ENCODE measurements at regions of chr17 and their contacts with region 1.

Region 1: GRCh38 chr17:41548844-41549595 is 20.9 kb upstream of the KRT19 start:
- DNase-seq: peak; percentile 65 to 71 (median 66)
- H3K4me3 ChIP-seq: peak overlapping the region; percentile 0 to 64 (median 21)
- H3K4me3 Mint-ChIP-seq: peak overlapping the region; percentile 66 to 80
- H3K27ac ChIP-seq: no peak overlapping the region
- H3K27ac Mint-ChIP-seq: peak overlapping the region in 3 of 7 donors; percentile 48 to 80 (median 60)
- H3K4me1 ChIP-seq: peaks cover 16 to 20% of the 10 kb centered on the region in 2 donors
- H3K4me1 Mint-ChIP-seq: peaks cover 21% of the 10 kb centered on the region
- H3K27me3 ChIP-seq: no peaks in the 10 kb centered on the region
- H3K27me3 Mint-ChIP-seq: peaks cover 1 to 15% (median 8%) of the 10 kb centered on the region in 3 donors
- CTCF ChIP-seq: peak; percentile 100

Region 2: DNA sequence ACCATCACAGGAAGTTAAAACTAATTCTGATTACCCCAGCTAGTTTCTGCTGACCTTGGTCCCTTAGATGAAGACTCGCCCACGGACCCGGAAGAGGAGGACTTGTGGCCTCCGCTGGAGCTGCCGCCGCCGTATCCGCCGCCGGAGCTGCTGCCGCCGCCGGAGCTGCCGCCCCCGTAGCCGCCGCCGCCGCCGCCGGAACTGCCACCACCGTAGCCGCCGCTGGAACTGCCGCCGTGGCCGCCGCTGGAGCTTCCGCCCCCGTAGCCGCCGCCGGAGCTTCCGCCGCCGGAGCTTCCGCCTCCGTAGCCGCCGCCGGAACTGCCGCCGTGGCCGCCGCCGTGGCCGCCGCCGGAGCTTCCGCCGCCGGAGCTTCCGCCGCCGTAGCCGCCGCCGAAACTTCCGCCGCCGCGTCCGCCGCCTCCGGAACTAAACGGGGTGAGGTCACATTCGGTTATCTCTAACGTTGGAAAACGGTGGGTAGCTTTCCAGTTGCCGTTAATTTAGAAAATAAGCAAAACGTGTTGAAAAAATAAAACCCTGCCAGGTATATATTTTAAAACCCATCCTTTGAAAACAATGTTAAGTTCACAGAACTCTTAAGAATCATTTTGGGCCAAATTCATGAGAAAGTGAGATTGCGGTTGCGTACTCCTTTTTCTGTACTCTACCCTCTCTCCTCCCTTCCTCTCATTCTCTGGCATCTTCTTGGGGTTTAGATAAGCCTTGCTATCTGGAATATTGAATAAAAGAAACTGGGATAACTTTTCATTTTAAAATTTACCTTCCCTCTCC is 730.1 kb before region 1 on chr17:
- intact Hi-C with region 1: loop called in 1 of 2 experiments (anchors 5 kb)
- DNase-seq: peak; percentile 67 to 90 (median 72)
- H3K4me3 ChIP-seq: peak overlapping the region; percentile 77 to 99 (median 85)
- H3K4me3 Mint-ChIP-seq: peak overlapping the region; percentile 82 to 92
- H3K27ac ChIP-seq: peak overlapping the region; percentile 42 to 48
- H3K27ac Mint-ChIP-seq: peak overlapping the region; percentile 41 to 84 (median 79)
- H3K4me1 ChIP-seq: peaks cover 8 to 14% of the 10 kb centered on the region in 2 donors
- H3K4me1 Mint-ChIP-seq: peaks cover 12% of the 10 kb centered on the region
- H3K27me3 ChIP-seq: peaks cover 10 to 34% of the 10 kb centered on the region in 2 donors
- H3K27me3 Mint-ChIP-seq: peaks cover 24 to 38% (median 29%) of the 10 kb centered on the region in 3 donors
- CTCF ChIP-seq: no peak

Region 3: GRCh38 chr17:41486809-41487720 is 62.0 kb before region 1 on chr17:
- intact Hi-C with region 1: loop called (anchors 5 kb)
- DNase-seq: peak; percentile 36 to 57 (median 50)
- H3K4me3 ChIP-seq: no peak overlapping the region
- H3K4me3 Mint-ChIP-seq: no peak overlapping the region
- H3K27ac ChIP-seq: no peak overlapping the region
- H3K27ac Mint-ChIP-seq: no peak overlapping the region
- H3K4me1 ChIP-seq: peaks cover 31 to 36% of the 10 kb centered on the region in 2 donors
- H3K4me1 Mint-ChIP-seq: peaks cover 32% of the 10 kb centered on the region
- H3K27me3 ChIP-seq: no peaks in the 10 kb centered on the region
- H3K27me3 Mint-ChIP-seq: peaks cover 2 to 7% (median 6%) of the 10 kb centered on the region in 3 donors
- CTCF ChIP-seq: peak; percentile 70

Region 4: GRCh38 chr17:41530062-41531051 is 18.7 kb before region 1 on chr17:
- intact Hi-C with region 1: no loop called
- DNase-seq: no peak
- H3K4me3 ChIP-seq: no peak overlapping the region
- H3K4me3 Mint-ChIP-seq: no peak overlapping the region
- H3K27ac ChIP-seq: no peak overlapping the region
- H3K27ac Mint-ChIP-seq: no peak overlapping the region
- H3K4me1 ChIP-seq: peaks cover 6 to 10% of the 10 kb centered on the region in 2 donors
- H3K4me1 Mint-ChIP-seq: peaks cover 15% of the 10 kb centered on the region
- H3K27me3 ChIP-seq: peaks cover 39 to 65% of the 10 kb centered on the region in 2 donors
- H3K27me3 Mint-ChIP-seq: peaks cover 55 to 82% (median 70%) of the 10 kb centered on the region in 3 donors
- CTCF ChIP-seq: no peak

Region 5: GRCh38 chr17:41583137-41584127 is 34.4 kb after region 1 on chr17:
- intact Hi-C with region 1: no loop called
- DNase-seq: no peak
- H3K4me3 ChIP-seq: no peak overlapping the region
- H3K4me3 Mint-ChIP-seq: no peak overlapping the region
- H3K27ac ChIP-seq: no peak overlapping the region
- H3K27ac Mint-ChIP-seq: no peak overlapping the region
- H3K4me1 ChIP-seq: peaks cover 3 to 6% of the 10 kb centered on the region in 2 donors
- H3K4me1 Mint-ChIP-seq: peaks cover 4% of the 10 kb centered on the region
- H3K27me3 ChIP-seq: no peaks in the 10 kb centered on the region
- H3K27me3 Mint-ChIP-seq: peaks cover 2 to 13% (median 10%) of the 10 kb centered on the region in 3 donors
- CTCF ChIP-seq: no peak

Region 6: GRCh38 chr17:41648411-41649195 is 99.6 kb after region 1 on chr17:
- intact Hi-C with region 1: loop called (anchors 1 to 5 kb)
- DNase-seq: peak; percentile 71 to 81 (median 80)
- H3K4me3 ChIP-seq: peak overlapping the region in 2 of 3 experiments; percentile 15 to 75
- H3K4me3 Mint-ChIP-seq: peak overlapping the region; percentile 72 to 82
- H3K27ac ChIP-seq: no peak overlapping the region
- H3K27ac Mint-ChIP-seq: peak overlapping the region in 3 of 7 donors; percentile 79 to 87 (median 82)
- H3K4me1 ChIP-seq: peaks cover 32 to 36% of the 10 kb centered on the region in 2 donors
- H3K4me1 Mint-ChIP-seq: peaks cover 26% of the 10 kb centered on the region
- H3K27me3 ChIP-seq: no peaks in the 10 kb centered on the region
- H3K27me3 Mint-ChIP-seq: peaks cover 2 to 7% (median 6%) of the 10 kb centered on the region in 3 donors
- CTCF ChIP-seq: peak; percentile 85